ENCODE measurements at regions of chr7 and their contacts with region 1.

Region 1: GRCh38 chr7:54664235-54665228 is 94.5 kb downstream of the SEC61G start:
- DNase-seq: peak; percentile 40
- ATAC-seq: peak; percentile 99
- H3K4me3 ChIP-seq: peak overlapping the region in 2 of 3 experiments; percentile 37 to 64; a peak in 4 of 6 replicates
- H3K27ac ChIP-seq: no peak overlapping the region
- H3K4me1 ChIP-seq: peaks cover 5% of the 10 kb centered on the region; the same call in 1 of the 2 replicates
- H3K27me3 ChIP-seq: peaks cover 0 to 27% of the 10 kb centered on the region in 2 experiments; a peak in 3 of 5 replicates
- CTCF ChIP-seq: peak; percentile 94
- EP300 ChIP-seq: no peak
- POLR2A ChIP-seq: no peak
- RAD21 ChIP-seq: peak; percentile 65

Region 2: GRCh38 chr7:54546081-54546985 is 118.2 kb before region 1 on chr7:
- CTCF ChIA-PET with region 1: interaction called, 3 read pairs
- POLR2A ChIA-PET with region 1: no interaction called
- in situ Hi-C with region 1: loop called (anchors 5 kb)
- intact Hi-C with region 1: loop called (anchors 1 kb)
- DNase-seq: peak; percentile 20
- ATAC-seq: peak; percentile 95
- H3K4me3 ChIP-seq: peak overlapping the region in 1 of 3 experiments; percentile 50; a peak in 2 of 6 replicates
- H3K27ac ChIP-seq: no peak overlapping the region
- H3K4me1 ChIP-seq: no peaks in the 10 kb centered on the region
- H3K27me3 ChIP-seq: peaks cover 0 to 41% of the 10 kb centered on the region in 2 experiments; a peak in 4 of 5 replicates
- CTCF ChIP-seq: peak; percentile 71
- EP300 ChIP-seq: no peak
- POLR2A ChIP-seq: no peak
- RAD21 ChIP-seq: peak; percentile 41; the same call in 1 of the 2 replicates